ENCODE measurements at regions of chr19 and their contacts with region 1.

Region 1: GRCh38 chr19:10269333-10270179 is 1.4 kb upstream of the ICAM1 start:
- H3K4me3 ChIP-seq: no peak overlapping the region; the same call in none of the 2 replicates
- H3K27ac ChIP-seq: no peak overlapping the region
- H3K4me1 ChIP-seq: no peaks in the 10 kb centered on the region
- CTCF ChIP-seq: peak; percentile 93

Region 2: GRCh38 chr19:10219678-10220077 is 49.9 kb before region 1 on chr19:
- CTCF ChIA-PET with region 1: no interaction called
- POLR2A ChIA-PET with region 1: no interaction called
- H3K4me3 ChIP-seq: no peak overlapping the region
- H3K27ac ChIP-seq: no peak overlapping the region
- H3K4me1 ChIP-seq: no peaks in the 10 kb centered on the region
- CTCF ChIP-seq: no peak

Region 3: GRCh38 chr19:10230861-10231611 is 38.5 kb before region 1 on chr19 and contains the start of gene S1PR2:
- CTCF ChIA-PET with region 1: no interaction called
- POLR2A ChIA-PET with region 1: no interaction called
- H3K4me3 ChIP-seq: peak within 1 kb of the TSS; percentile 78
- H3K27ac ChIP-seq: peak within 1 kb of the TSS; percentile 74; the same call in 1 of the 2 replicates
- H3K4me1 ChIP-seq: no peaks in the 10 kb centered on the region
- CTCF ChIP-seq: no peak

Region 4: DNA sequence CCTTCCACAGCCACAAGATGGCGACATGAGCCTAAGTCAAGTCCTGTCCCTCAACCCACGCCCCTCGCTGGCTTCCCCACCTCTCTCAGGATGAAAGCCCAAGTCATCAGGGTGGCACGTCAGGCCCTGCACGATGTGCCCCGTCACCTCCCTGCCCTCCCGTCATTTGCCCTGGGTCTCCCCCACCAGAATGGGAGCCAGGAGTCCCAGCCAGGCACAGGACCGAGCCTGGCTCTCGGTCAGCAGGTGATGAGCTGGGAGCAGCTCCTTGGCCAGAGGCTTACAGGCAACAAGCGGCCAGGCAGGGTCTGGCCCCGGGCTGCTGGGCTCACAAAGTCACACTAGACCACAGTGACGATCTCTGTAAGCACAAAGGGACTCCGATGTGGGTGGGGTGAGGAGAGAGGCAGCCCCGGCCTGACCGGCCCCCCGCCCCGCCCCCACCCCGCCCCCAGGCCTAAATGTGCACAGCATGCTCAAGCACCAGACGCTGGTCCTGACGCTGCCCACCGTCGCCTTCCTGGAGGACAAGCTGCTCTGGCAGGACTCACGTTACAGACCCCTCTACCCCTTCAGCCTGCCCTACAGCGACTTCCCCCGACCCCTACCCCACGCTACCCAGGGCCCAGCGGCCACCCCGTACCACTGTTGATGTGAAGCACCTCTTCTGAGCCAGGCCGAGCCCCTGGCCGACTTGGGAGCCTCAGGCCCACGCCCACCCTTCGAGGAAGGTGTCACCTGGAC is 10.2 kb before region 1 on chr19:
- CTCF ChIA-PET with region 1: interaction called, 44 read pairs
- POLR2A ChIA-PET with region 1: interaction called, 5 read pairs
- H3K4me3 ChIP-seq: no peak overlapping the region
- H3K27ac ChIP-seq: no peak overlapping the region
- H3K4me1 ChIP-seq: no peaks in the 10 kb centered on the region
- CTCF ChIP-seq: peak; percentile 85

Region 5: GRCh38 chr19:10286803-10287737 is 17.5 kb after region 1 on chr19 and contains the start of gene ICAM4:
- CTCF ChIA-PET with region 1: interaction called, 15 read pairs
- POLR2A ChIA-PET with region 1: interaction called, 11 read pairs
- H3K4me3 ChIP-seq: no peak within 1 kb of the TSS
- H3K27ac ChIP-seq: peak within 1 kb of the TSS; percentile 27; the same call in 1 of the 2 replicates
- H3K4me1 ChIP-seq: peaks cover 4% of the 10 kb centered on the region; the same call in 1 of the 2 replicates
- CTCF ChIP-seq: no peak

Region 6: DNA sequence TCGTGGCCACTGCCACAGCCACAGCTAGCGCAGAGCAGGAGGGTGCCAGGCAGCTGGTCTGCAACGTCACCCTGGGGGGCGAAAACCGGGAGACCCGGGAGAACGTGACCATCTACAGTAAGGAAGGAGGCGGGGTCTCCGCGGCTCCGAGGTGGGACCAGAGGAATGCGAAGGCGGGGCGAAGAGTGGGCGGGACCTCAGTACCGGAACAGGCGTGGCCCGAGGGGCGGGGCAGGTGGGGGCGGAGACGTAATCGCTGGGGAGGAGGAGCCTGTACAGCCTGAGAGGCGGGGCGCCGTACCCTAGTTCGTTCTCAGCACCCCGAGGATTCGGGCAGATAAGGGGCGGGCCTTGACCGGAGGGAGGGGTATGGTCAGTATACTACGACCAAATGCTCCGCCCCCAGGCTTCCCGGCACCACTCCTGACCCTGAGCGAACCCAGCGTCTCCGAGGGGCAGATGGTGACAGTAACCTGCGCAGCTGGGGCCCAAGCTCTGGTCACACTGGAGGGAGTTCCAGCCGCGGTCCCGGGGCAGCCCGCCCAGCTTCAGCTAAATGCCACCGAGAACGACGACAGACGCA is 22.7 kb after region 1 on chr19:
- CTCF ChIA-PET with region 1: interaction called, 12 read pairs
- POLR2A ChIA-PET with region 1: interaction called, 11 read pairs
- H3K4me3 ChIP-seq: peak overlapping the region; percentile 43
- H3K27ac ChIP-seq: peak overlapping the region; percentile 6; the same call in 1 of the 2 replicates
- H3K4me1 ChIP-seq: peaks cover 4% of the 10 kb centered on the region; the same call in 1 of the 2 replicates
- CTCF ChIP-seq: no peak

Measured in HEK293 (cell line).